Naive thymus-derived CD8-positive, alpha-beta T cell (primary cell): ENCODE measurements at regions of chr19 and their contacts with region 1.

Region 1: GRCh38 chr19:18846862-18847548 is 15.2 kb downstream of the UPF1 start:
- DNase-seq: peak; percentile 51 to 81 (median 66)
- ATAC-seq: peak; percentile 76 to 78
- H3K4me3 Mint-ChIP-seq: peak overlapping the region in 9 of 10 donors; percentile 7 to 75 (median 62)
- H3K27ac Mint-ChIP-seq: peak overlapping the region in 8 of 10 donors; percentile 11 to 93 (median 64)
- H3K4me1 Mint-ChIP-seq: peaks cover 36 to 71% (median 61%) of the 10 kb centered on the region in 4 donors
- H3K27me3 Mint-ChIP-seq: no peaks in the 10 kb centered on the region

Region 2: DNA sequence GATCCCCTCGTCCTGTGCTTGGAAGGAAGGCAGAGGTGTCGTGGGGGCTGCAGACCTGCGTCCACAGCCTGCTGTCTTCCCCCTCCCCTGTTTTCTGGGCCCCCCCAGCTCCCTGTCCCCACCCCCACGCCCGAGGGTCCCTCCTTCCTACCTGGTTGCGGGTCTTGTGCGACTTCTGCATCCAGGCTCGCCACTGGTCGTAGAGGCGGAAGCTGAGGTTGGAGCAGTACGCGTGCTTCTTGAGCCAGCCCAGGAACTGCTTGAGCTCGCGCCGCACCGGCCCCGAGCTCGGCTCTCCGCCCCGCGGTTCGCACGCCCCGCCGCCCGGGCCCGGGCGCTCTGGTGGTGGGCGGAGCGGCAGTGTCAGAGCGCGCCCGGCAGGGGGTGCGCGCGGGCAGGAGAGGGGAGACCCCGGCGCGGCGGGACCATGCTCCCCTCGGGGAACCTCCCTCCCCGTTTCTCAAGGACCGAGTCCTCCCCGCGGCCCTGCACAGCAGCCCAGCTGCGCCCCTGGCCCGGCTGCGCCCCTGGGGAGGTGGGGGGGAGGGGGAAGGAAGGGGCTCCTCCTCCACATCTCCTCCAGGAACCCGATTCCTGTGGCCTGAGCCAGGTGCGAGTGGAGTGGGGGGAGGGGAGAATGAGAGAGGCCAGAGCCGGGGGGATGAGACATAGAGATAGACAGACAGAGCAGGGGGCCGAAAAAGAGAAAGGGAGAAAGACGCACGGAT is 252.7 kb before region 1 on chr19:
- POLR2A ChIA-PET with region 1: interaction called, 19 read pairs
- DNase-seq: peak; percentile 66 to 85 (median 78)
- ATAC-seq: peak; percentile 73 to 77
- H3K4me3 Mint-ChIP-seq: peak overlapping the region; percentile 64 to 91 (median 79)
- H3K27ac Mint-ChIP-seq: peak overlapping the region in 9 of 10 donors; percentile 40 to 89 (median 78)
- H3K4me1 Mint-ChIP-seq: peaks cover 14 to 31% (median 30%) of the 10 kb centered on the region in 4 donors
- H3K27me3 Mint-ChIP-seq: peaks cover 0 to 4% (median 0%) of the 10 kb centered on the region in 5 donors

Region 3: GRCh38 chr19:18879579-18880373 is 32.8 kb after region 1 on chr19:
- POLR2A ChIA-PET with region 1: no interaction called
- DNase-seq: peak in 3 of 10 donors; percentile 19 to 29 (median 20)
- ATAC-seq: peak; percentile 68 to 81
- H3K4me3 Mint-ChIP-seq: no peak overlapping the region
- H3K27ac Mint-ChIP-seq: peak overlapping the region in 1 of 10 donors; percentile 48
- H3K4me1 Mint-ChIP-seq: peaks cover 0 to 2% (median under 1%) of the 10 kb centered on the region in 4 donors
- H3K27me3 Mint-ChIP-seq: no peaks in the 10 kb centered on the region